Naive thymus-derived CD4-positive, alpha-beta T cell (primary cell): ENCODE measurements at regions of chr7 and their contacts with region 1.

Region 1: DNA sequence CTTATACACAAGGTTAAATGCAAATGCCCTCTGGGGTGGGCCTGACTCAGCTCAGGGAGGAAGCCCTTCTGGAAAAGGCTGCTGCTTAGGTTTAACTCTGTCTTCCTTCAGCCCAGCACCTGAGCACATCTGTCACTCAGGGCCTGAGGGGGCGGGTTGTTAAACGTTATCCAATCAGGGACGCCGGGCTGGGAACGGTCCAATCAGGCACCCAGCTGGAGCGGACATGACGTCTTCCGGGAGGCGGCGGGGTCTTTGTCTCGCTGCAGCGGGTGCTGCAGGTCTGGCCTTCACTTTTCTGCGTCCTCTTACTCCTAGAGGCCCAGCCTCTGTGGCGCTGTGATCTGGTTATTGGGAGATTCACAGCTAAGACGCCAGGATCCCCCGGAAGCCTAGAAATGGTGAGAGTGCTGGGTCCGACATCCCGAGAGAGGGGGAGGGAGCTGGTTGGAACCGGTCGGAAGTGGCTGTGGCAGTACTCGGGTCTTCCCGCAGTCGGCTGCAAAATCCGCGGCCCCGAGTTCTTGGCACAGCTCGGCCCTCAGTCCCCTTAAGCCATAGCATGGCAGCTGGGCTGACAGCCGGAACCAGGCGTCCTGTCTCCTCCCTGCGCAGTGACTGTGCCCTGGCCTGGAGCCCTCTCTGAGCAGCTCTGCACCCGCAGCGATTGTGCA is at the start of gene ZNF138:
- DNase-seq: peak; percentile 76 to 96 (median 94)
- ATAC-seq: peak; percentile 100
- H3K4me3 ChIP-seq: peak within 1 kb of the TSS; percentile 92
- H3K4me3 Mint-ChIP-seq: peak within 1 kb of the TSS; percentile 92 to 99 (median 98)
- H3K27ac ChIP-seq: peak within 1 kb of the TSS; percentile 83
- H3K27ac Mint-ChIP-seq: peak within 1 kb of the TSS; percentile 91 to 99 (median 98)
- H3K4me1 ChIP-seq: peaks cover 9 to 17% of the 10 kb centered on the region in 2 donors
- H3K4me1 Mint-ChIP-seq: peaks cover 18 to 56% (median 44%) of the 10 kb centered on the region in 7 donors
- H3K27me3 ChIP-seq: no peaks in the 10 kb centered on the region
- H3K27me3 Mint-ChIP-seq: no peaks in the 10 kb centered on the region
- total RNA-seq, gene ZNF138: 8.8 to 19.0 (median 10.6) TPM

Region 2: DNA sequence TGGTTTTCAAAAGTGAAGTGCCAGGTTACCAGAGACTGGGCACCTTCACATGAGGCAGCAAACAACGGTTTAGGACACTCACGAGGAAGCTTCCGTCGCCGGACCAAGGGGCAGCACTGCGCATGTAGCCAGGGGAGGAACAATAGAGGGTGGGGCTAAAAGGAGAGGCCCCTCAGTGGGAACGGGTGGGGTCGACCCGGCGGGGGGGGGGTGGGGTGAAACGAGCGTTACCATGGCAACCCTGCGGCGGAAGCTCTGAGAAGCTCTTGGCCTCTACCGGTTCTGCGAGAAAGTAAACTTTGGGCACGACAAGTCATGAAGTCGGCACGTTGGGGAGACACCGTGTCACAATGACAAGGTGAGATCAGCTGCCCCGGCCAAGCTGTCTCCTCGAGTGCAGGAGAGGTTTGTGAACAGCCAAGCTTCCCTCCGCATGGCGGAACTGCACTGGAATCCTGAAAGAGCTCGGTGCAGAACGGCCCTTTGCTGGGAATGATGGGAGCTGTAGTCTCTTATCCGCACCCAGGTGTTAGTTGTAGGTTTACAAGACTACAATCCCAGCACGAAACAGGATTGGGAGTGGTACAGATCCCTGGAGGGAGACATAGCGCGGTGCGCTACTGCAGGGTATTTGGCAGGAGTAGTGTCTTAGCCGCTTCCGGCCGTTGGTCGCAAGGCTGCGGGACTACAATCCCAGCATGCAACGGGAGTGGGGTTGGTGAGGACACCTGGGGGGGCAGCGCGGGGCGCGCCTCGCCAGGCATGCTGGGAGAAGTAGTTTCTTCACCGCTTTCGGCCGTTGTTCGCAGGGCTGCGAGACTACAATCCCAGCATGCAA is 868.5 kb before region 1 on chr7:
- CTCF ChIA-PET with region 1: no interaction called
- POLR2A ChIA-PET with region 1: no interaction called
- intact Hi-C with region 1: loop called (anchors 1 to 2 kb)
- DNase-seq: peak; percentile 69 to 98 (median 95)
- ATAC-seq: peak; percentile 98
- H3K4me3 ChIP-seq: peak overlapping the region; percentile 64
- H3K4me3 Mint-ChIP-seq: peak overlapping the region; percentile 88 to 100 (median 98)
- H3K27ac ChIP-seq: peak overlapping the region; percentile 82
- H3K27ac Mint-ChIP-seq: peak overlapping the region; percentile 87 to 98 (median 95)
- H3K4me1 ChIP-seq: no peaks in the 10 kb centered on the region
- H3K4me1 Mint-ChIP-seq: peaks cover 0 to 24% (median 12%) of the 10 kb centered on the region in 7 donors
- H3K27me3 ChIP-seq: no peaks in the 10 kb centered on the region
- H3K27me3 Mint-ChIP-seq: peaks cover 0 to 4% (median 0%) of the 10 kb centered on the region in 5 donors

Region 3: GRCh38 chr7:64313740-64314491 is 480.4 kb before region 1 on chr7 and contains the start of gene ZNF736:
- CTCF ChIA-PET with region 1: interaction called, 4 read pairs
- POLR2A ChIA-PET with region 1: interaction called, 6 read pairs
- intact Hi-C with region 1: loop called (anchors 1 kb)
- DNase-seq: peak; percentile 64 to 92 (median 87)
- ATAC-seq: peak; percentile 100
- H3K4me3 ChIP-seq: peak within 1 kb of the TSS; percentile 81
- H3K4me3 Mint-ChIP-seq: peak within 1 kb of the TSS; percentile 90 to 100 (median 98)
- H3K27ac ChIP-seq: peak within 1 kb of the TSS; percentile 88
- H3K27ac Mint-ChIP-seq: peak within 1 kb of the TSS; percentile 88 to 100 (median 97)
- H3K4me1 ChIP-seq: peaks cover 8 to 12% of the 10 kb centered on the region in 2 donors
- H3K4me1 Mint-ChIP-seq: peaks cover 22 to 54% (median 39%) of the 10 kb centered on the region in 7 donors
- H3K27me3 ChIP-seq: no peaks in the 10 kb centered on the region
- H3K27me3 Mint-ChIP-seq: no peaks in the 10 kb centered on the region
- total RNA-seq, gene ZNF736: 22.8 to 54.2 (median 35.8) TPM

Region 4: DNA sequence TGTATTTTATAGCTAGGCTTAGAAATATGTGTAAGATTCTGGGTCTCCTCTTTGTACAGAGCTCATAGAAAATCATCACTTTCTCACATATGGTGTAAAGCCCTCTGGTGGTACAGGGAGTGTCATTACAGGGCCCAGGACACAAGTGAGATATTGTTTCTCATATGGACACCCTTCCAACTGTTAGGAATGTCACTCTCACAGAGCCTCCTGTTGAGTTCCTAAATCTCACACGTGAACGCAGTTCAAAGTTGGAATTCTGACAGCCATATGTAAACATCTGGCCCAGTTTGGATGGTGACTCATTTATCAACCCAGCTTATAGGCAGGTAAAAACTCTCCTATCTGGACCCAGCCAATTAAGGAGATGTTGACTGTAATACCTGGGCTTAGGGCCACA is 163.8 kb before region 1 on chr7:
- CTCF ChIA-PET with region 1: interaction called, 7 read pairs
- POLR2A ChIA-PET with region 1: no interaction called
- intact Hi-C with region 1: loop called in 1 of 2 experiments (anchors 1 kb)
- DNase-seq: peak in 3 of 9 donors; percentile 9 to 12 (median 11)
- ATAC-seq: peak; percentile 48
- H3K4me3 ChIP-seq: no peak overlapping the region
- H3K4me3 Mint-ChIP-seq: no peak overlapping the region
- H3K27ac ChIP-seq: no peak overlapping the region
- H3K27ac Mint-ChIP-seq: no peak overlapping the region
- H3K4me1 ChIP-seq: no peaks in the 10 kb centered on the region
- H3K4me1 Mint-ChIP-seq: no peaks in the 10 kb centered on the region
- H3K27me3 ChIP-seq: no peaks in the 10 kb centered on the region
- H3K27me3 Mint-ChIP-seq: no peaks in the 10 kb centered on the region

Region 5: DNA sequence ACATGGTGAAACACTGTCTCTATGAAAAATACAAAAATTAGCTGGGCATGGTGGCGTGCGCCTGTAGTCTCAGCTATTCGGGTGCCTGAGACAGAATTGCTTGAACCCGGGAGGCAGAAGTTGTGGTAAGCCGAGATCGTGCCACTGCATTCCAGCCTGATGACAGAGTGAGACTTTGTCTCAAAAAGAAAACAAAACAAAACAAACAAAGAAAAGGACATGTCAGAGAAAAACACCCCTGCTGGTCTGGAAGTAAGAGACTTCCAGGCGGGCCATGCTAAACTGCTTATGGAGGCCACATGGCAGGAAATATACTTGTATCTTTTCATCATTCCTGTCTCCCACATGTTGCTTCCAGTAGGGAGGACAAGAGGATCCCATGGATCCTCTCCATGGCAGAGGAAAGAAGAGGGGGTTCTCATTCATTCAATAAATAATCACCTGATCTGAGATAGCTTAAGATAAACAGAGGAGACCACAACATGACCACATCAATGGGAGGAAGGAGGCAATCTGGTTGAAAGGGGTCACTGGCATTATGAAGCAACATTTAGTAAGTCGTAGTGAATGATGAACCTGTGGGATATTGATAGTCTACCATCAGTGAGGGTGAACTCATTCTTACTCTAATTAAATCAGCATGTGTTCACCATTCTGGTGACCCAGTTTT is 60.6 kb before region 1 on chr7:
- CTCF ChIA-PET with region 1: no interaction called
- POLR2A ChIA-PET with region 1: no interaction called
- intact Hi-C with region 1: no loop called
- DNase-seq: no peak
- ATAC-seq: no peak
- H3K4me3 ChIP-seq: no peak overlapping the region
- H3K4me3 Mint-ChIP-seq: no peak overlapping the region
- H3K27ac ChIP-seq: no peak overlapping the region
- H3K27ac Mint-ChIP-seq: peak overlapping the region in 1 of 9 donors; percentile 53
- H3K4me1 ChIP-seq: no peaks in the 10 kb centered on the region
- H3K4me1 Mint-ChIP-seq: no peaks in the 10 kb centered on the region
- H3K27me3 ChIP-seq: no peaks in the 10 kb centered on the region
- H3K27me3 Mint-ChIP-seq: no peaks in the 10 kb centered on the region

Region 6: GRCh38 chr7:64887756-64888508 is 93.6 kb after region 1 on chr7:
- CTCF ChIA-PET with region 1: interaction called, 3 read pairs
- POLR2A ChIA-PET with region 1: no interaction called
- intact Hi-C with region 1: loop called in 1 of 2 experiments (anchors 5 kb)
- DNase-seq: peak in 7 of 9 donors; percentile 16 to 31 (median 25)
- ATAC-seq: peak; percentile 75
- H3K4me3 ChIP-seq: peak overlapping the region; percentile 62
- H3K4me3 Mint-ChIP-seq: peak overlapping the region; percentile 87 to 96 (median 90)
- H3K27ac ChIP-seq: no peak overlapping the region
- H3K27ac Mint-ChIP-seq: peak overlapping the region in 2 of 9 donors; percentile 32 to 40
- H3K4me1 ChIP-seq: peaks cover 0 to 10% of the 10 kb centered on the region in 2 donors
- H3K4me1 Mint-ChIP-seq: peaks cover 11 to 22% (median 14%) of the 10 kb centered on the region in 7 donors
- H3K27me3 ChIP-seq: peaks cover 0 to 14% of the 10 kb centered on the region in 2 donors
- H3K27me3 Mint-ChIP-seq: peaks cover 54 to 73% (median 60%) of the 10 kb centered on the region in 5 donors

Region 7: GRCh38 chr7:64934478-64934877 is 140.2 kb after region 1 on chr7:
- CTCF ChIA-PET with region 1: no interaction called
- POLR2A ChIA-PET with region 1: no interaction called
- intact Hi-C with region 1: no loop called
- DNase-seq: no peak
- ATAC-seq: no peak
- H3K4me3 ChIP-seq: no peak overlapping the region
- H3K4me3 Mint-ChIP-seq: no peak overlapping the region
- H3K27ac ChIP-seq: no peak overlapping the region
- H3K27ac Mint-ChIP-seq: no peak overlapping the region
- H3K4me1 ChIP-seq: no peaks in the 10 kb centered on the region
- H3K4me1 Mint-ChIP-seq: no peaks in the 10 kb centered on the region
- H3K27me3 ChIP-seq: no peaks in the 10 kb centered on the region
- H3K27me3 Mint-ChIP-seq: no peaks in the 10 kb centered on the region

Region 8: DNA sequence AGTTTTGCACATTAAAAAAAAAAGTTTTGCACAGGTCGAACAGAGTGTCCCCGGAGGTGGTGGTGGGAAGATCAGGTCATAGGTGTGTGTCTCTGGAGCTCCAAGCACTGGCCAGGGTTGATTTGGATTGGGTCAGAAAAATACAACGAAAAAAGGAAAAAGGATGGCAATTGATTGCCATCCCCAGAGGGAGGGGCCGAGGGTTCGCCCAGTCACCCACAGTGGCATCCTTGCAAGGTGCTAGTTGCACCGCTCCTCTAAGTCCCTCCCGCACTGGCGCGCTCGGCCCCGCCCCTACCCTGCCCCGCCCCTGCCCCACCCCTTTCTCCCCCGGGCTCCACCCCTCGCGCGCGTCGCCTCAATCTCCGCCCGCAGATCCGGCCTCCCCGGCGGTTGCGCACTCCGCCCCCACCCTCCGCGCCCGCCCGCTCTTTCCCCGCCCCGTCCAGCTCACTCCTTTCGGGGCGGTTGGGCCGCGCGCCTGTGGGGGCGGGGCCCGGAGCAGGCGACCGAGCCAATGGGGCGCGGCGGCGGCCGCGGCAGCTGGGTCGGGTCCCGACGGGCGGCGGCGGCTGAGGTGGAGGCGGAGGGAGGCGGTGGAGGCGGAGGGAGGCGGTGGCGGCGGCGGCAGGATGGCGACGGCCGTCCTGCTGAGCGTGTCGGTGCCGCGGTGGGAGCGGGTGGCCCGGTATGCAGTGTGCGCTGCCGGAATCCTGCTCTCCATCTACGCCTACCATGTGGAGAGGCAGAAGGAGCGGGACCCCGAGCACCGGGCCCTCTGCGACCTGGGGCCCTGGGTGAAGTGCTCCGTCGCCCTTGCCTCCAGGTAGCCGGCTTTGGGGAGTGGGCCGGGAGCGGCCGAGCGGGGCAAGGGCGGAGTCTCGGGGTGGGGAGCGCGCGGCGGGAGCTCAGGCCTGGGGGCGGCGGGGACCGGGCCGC is 243.7 kb after region 1 on chr7:
- CTCF ChIA-PET with region 1: no interaction called
- POLR2A ChIA-PET with region 1: no interaction called
- intact Hi-C with region 1: loop called (anchors 1 kb)
- DNase-seq: peak; percentile 85 to 92 (median 88)
- ATAC-seq: peak; percentile 95
- H3K4me3 ChIP-seq: no peak overlapping the region
- H3K4me3 Mint-ChIP-seq: peak overlapping the region; percentile 77 to 87 (median 82)
- H3K27ac ChIP-seq: peak overlapping the region; percentile 80
- H3K27ac Mint-ChIP-seq: peak overlapping the region; percentile 10 to 91 (median 83)
- H3K4me1 ChIP-seq: peaks cover 0 to 8% of the 10 kb centered on the region in 2 donors
- H3K4me1 Mint-ChIP-seq: peaks cover 7 to 18% (median 15%) of the 10 kb centered on the region in 7 donors
- H3K27me3 ChIP-seq: no peaks in the 10 kb centered on the region
- H3K27me3 Mint-ChIP-seq: no peaks in the 10 kb centered on the region